ENCODE measurements at regions of chr10 and their contacts with region 1.

Region 1: DNA sequence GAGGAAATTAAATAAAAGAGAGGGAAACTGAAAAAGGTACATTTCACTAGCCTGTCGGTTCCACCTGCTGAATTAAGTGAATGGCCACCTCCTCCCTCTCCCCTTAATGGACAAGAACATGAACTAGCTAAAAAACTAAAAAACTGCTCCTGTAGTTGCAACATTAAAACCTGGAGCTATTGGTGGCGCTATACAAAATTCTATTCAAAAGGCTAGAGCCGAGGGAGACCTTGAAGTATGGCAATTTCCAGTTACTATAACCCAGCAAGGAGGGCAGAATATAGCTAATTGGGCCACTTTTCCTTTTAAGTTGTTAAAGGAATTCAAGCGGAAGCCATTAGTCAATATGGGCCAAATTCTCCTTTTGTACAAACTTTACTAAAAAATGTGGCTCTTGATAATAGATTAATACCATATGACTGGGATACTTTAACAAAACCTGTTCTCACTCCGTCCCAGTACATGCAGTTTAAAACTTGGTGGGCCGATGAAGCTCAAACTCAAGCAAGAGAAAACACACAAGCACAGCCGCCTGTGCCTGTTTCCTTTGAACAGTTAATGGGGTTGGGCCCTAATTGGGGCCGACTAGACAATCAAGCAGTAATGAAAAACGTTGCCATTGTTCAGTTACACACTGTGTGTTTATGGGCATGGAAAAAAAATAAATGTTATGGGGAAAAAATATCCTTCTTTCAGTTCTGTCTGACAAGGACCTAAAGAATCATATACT is 6.5 kb upstream of the CHST3 start:
- DNase-seq: no peak
- H3K4me3 ChIP-seq: no peak overlapping the region
- H3K27ac ChIP-seq: no peak overlapping the region
- H3K4me1 ChIP-seq: no peaks in the 10 kb centered on the region
- H3K27me3 ChIP-seq: no peaks in the 10 kb centered on the region
- CTCF ChIP-seq: no peak
- POLR2A ChIP-seq: no peak

Region 2: DNA sequence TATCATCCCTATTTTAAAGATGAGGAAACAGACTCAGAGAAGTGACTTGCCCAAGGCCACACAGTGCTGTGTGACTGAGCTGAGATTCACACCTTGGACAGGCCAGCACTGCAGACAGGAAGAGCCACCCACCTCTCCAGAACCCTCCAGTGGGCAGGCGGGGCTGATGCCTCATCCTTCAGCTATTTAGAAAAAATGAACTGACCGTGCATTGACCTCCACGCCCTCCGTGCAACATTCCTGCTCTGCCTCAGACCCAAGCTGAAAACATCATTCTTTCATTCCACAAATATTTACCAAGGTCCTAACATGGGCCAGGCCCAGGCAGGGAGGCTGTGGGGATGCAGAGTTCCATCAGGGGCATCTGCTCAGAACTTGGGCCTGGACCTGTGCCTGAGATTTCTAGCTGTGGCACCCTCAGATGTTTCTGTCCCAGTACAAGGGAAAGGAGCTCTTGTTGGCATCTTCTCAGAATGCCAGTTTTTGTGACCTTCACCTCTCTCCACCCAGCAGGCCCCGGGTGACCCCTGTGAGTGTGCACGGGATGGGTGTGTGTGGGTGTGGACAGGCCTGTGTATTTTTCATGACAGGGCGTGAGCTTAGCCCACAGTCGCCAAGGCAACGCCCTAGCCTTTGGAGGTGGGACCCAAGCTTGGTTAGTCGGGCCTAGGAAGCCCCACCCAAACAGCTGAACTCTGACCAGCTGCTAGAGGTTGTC is 190.8 kb before region 1 on chr10:
- intact Hi-C with region 1: no loop called
- DNase-seq: peak; percentile 70 to 83
- H3K4me3 ChIP-seq: no peak overlapping the region
- H3K27ac ChIP-seq: peak overlapping the region; percentile 94 to 97
- H3K4me1 ChIP-seq: peaks cover 26 to 58% of the 10 kb centered on the region in 2 donors
- H3K27me3 ChIP-seq: no peaks in the 10 kb centered on the region
- CTCF ChIP-seq: no peak
- POLR2A ChIP-seq: no peak

Region 3: GRCh38 chr10:72048450-72049124 is 90.9 kb after region 1 on chr10:
- intact Hi-C with region 1: loop called (anchors 2 kb)
- DNase-seq: peak; percentile 94 to 95
- H3K4me3 ChIP-seq: no peak overlapping the region
- H3K27ac ChIP-seq: peak overlapping the region in 1 of 2 donors; percentile 31
- H3K4me1 ChIP-seq: no peaks in the 10 kb centered on the region
- H3K27me3 ChIP-seq: no peaks in the 10 kb centered on the region
- CTCF ChIP-seq: peak; percentile 97 to 100 (median 100)
- POLR2A ChIP-seq: no peak

Region 4: DNA sequence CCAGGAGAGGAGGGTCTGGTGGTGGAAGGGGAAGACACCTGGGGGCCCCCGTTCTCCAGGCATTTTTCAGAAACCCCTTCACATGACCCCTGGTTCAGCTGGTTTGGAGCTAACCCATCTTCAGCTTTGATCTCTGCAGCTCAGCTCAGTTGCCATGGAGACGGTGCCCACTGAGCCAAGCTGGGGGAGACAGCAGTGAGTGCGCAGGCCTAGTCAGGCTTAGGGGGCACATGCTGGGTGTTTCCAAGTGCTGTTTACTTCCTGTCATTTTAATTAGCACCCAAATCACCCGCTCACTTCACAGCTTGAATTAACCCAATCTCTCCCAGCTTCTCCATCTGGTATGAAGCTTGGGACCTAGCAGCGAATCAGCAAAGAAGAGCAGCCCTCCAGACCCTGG is 121.6 kb after region 1 on chr10:
- intact Hi-C with region 1: no loop called
- DNase-seq: no peak
- H3K4me3 ChIP-seq: no peak overlapping the region
- H3K27ac ChIP-seq: no peak overlapping the region
- H3K4me1 ChIP-seq: no peaks in the 10 kb centered on the region
- H3K27me3 ChIP-seq: no peaks in the 10 kb centered on the region
- CTCF ChIP-seq: no peak
- POLR2A ChIP-seq: no peak

Region 5: GRCh38 chr10:72123616-72124015 is 165.9 kb after region 1 on chr10:
- intact Hi-C with region 1: no loop called
- DNase-seq: no peak
- H3K4me3 ChIP-seq: no peak overlapping the region
- H3K27ac ChIP-seq: no peak overlapping the region
- H3K4me1 ChIP-seq: no peaks in the 10 kb centered on the region
- H3K27me3 ChIP-seq: no peaks in the 10 kb centered on the region
- CTCF ChIP-seq: no peak
- POLR2A ChIP-seq: no peak

Measured in uterus (tissue), 4 donors.